Panc1 (cell line): ENCODE measurements at regions of chr5 and their contacts with region 1.

Region 1: DNA sequence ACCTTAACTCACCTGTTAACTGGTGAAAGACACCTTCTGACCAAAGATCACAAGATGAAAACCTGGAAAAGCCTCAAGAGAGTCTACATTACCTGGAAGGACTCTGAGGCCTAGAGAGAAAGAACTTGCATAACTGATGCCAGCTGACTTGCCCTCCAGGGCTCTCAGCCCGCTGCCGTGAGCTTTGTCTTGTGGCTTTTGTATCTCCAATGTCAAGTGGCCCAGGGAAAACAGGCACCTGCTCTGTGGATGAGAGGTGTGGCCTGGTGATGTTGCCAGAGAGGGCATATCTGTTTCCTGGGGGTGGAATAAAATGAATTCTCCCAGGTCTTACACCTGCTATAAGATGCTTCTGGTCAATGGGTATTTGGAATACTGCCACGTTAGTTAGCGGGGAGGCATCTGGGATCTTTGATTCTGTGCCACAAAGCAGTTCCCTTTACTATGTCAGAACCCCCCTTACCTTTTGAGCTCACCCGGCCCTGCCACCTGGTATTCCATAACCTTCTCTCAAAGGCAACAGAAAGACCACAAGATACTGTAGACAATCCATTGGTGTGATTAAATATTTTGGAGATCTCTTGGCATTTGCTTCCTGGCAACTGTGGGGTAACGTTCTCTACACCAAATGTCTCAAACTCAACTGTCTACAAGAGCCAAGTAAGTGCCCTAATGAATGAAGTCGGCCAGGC is 54.9 kb upstream of the N4BP3 start:
- DNase-seq: no peak
- ATAC-seq: no peak
- H3K4me3 ChIP-seq: no peak overlapping the region
- H3K27ac ChIP-seq: no peak overlapping the region
- H3K4me1 ChIP-seq: no peaks in the 10 kb centered on the region
- H3K27me3 ChIP-seq: peaks cover 3% of the 10 kb centered on the region; the same call in 1 of the 2 replicates
- CTCF ChIP-seq: no peak

Region 2: DNA sequence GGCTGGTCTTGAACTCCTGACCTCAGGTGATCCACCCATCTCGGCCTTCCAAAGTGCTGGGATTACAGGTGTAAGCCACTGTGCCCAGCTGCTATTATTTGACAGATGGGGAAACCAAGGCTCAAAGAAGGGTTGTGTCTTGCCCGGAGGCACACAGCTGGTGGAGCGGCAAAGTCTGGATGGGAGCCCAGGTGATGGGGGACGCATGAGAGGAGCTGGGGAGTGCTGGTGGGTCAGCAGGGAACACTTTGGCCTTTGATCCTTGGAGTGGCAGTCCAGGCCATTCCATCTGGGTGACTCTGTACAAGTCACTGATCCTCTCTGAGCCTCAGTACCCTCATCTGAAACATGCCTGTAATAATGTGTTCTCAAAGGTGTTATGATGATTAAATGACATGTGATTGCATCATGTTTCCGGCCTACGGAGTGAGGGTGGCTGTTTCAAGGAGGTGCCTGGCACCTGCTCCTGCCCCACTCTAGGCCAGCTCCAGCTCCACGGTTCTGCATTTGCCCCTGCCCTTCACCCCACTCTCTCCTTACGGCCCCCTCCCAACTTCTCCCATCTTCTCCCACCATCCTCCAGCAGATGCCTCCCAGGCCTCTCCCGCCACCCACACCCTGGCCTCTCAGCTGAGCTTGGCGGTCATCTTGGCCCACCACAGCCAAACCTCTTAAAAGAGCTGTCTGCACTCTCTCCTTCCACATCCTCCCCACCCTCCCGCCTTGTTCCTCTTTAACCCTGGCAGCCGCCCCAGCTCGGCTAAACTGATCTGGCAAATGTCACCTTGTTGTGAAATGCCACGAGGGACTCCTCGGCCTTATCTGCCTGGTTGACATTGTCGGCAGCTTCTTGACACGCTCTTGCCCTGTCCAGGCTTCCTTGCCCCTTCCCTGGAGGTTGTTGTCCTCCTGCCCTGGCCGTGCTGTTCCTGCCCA is 579.5 kb before region 1 on chr5:
- CTCF ChIA-PET with region 1: no interaction called
- POLR2A ChIA-PET with region 1: no interaction called
- in situ Hi-C with region 1: no loop called
- intact Hi-C with region 1: no loop called
- DNase-seq: no peak
- ATAC-seq: no peak
- H3K4me3 ChIP-seq: no peak overlapping the region
- H3K27ac ChIP-seq: no peak overlapping the region
- H3K4me1 ChIP-seq: peaks cover 5% of the 10 kb centered on the region
- H3K27me3 ChIP-seq: no peaks in the 10 kb centered on the region
- CTCF ChIP-seq: no peak

Region 3: DNA sequence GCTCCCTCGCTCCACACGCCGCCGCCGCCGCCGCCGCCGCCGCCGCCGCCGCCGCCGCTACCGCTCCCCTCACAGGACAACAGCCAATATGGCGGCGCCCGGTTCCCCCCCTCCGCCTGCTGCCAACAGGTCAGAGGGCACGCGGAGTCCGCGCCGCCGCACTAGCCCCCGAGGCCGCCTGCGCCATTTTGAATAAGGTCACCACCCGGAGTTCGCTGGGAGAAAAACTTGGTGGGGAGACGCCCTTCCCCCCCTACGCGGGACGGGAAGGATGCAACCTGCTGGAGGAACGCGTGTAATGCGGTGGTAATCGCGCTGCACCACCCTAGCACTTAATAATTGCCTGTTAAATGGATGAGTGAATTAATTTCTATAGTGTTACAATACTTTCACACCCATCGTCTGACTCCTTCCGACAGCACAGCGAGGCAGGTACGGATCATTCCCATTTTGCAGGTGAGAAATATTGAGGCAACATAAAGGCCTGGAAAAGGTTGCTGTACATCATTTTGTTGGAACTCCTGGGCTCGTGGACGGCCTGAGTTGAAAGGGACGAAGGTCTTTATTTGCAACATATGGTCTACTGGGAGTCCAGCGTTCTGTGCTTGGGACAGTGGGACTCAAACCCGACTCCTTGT is 503.9 kb before region 1 on chr5 and contains the start of gene FAM193B:
- CTCF ChIA-PET with region 1: no interaction called
- POLR2A ChIA-PET with region 1: no interaction called
- in situ Hi-C with region 1: no loop called
- intact Hi-C with region 1: no loop called
- DNase-seq: peak; percentile 78
- ATAC-seq: peak; percentile 96
- H3K4me3 ChIP-seq: peak within 1 kb of the TSS; percentile 79 to 92
- H3K27ac ChIP-seq: peak within 1 kb of the TSS; percentile 74
- H3K4me1 ChIP-seq: peaks cover 13% of the 10 kb centered on the region
- H3K27me3 ChIP-seq: no peaks in the 10 kb centered on the region
- CTCF ChIP-seq: 0 out of 2 replicates have a peak, but pooled peaks have one; percentile 17
- total RNA-seq, gene FAM193B: 58.5 TPM

Region 4: GRCh38 chr5:177982072-177982727 is 76.3 kb before region 1 on chr5:
- CTCF ChIA-PET with region 1: no interaction called
- POLR2A ChIA-PET with region 1: no interaction called
- in situ Hi-C with region 1: no loop called
- intact Hi-C with region 1: loop called (anchors 5 kb)
- DNase-seq: no peak
- ATAC-seq: peak; percentile 77
- H3K4me3 ChIP-seq: no peak overlapping the region
- H3K27ac ChIP-seq: no peak overlapping the region
- H3K4me1 ChIP-seq: no peaks in the 10 kb centered on the region
- H3K27me3 ChIP-seq: no peaks in the 10 kb centered on the region
- CTCF ChIP-seq: no peak; the same call in none of the 2 replicates

Region 5: DNA sequence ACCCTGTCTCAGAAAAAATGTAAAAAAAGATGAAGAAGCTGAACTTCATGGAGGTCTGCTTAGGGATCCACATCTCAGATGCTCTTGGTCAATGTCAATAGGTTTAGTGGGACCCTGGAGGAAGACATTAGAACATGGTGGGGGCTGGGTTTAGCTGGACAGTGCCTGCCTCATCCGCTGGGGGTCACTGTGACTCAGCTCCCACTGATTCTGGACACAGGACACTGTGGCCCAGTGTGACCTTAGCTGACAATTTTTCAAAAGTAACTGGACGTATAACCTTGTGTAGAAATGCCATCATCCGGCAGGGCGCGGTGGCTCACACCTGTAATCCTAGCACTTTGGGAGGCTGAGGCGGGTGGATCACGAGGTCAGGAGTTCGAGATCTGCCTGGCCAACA is 138.5 kb after region 1 on chr5:
- CTCF ChIA-PET with region 1: interaction called, 11 read pairs
- POLR2A ChIA-PET with region 1: no interaction called
- in situ Hi-C with region 1: no loop called
- intact Hi-C with region 1: no loop called
- DNase-seq: no peak
- ATAC-seq: peak; percentile 65; the same call in 1 of the 2 replicates
- H3K4me3 ChIP-seq: no peak overlapping the region
- H3K27ac ChIP-seq: no peak overlapping the region
- H3K4me1 ChIP-seq: peaks cover 8% of the 10 kb centered on the region; the same call in 1 of the 2 replicates
- H3K27me3 ChIP-seq: no peaks in the 10 kb centered on the region
- CTCF ChIP-seq: peak; percentile 76; the same call in 1 of the 2 replicates